Astrocyte of the cerebellum (primary cell): ENCODE measurements at regions of chr12 and their contacts with region 1.

Region 1: DNA sequence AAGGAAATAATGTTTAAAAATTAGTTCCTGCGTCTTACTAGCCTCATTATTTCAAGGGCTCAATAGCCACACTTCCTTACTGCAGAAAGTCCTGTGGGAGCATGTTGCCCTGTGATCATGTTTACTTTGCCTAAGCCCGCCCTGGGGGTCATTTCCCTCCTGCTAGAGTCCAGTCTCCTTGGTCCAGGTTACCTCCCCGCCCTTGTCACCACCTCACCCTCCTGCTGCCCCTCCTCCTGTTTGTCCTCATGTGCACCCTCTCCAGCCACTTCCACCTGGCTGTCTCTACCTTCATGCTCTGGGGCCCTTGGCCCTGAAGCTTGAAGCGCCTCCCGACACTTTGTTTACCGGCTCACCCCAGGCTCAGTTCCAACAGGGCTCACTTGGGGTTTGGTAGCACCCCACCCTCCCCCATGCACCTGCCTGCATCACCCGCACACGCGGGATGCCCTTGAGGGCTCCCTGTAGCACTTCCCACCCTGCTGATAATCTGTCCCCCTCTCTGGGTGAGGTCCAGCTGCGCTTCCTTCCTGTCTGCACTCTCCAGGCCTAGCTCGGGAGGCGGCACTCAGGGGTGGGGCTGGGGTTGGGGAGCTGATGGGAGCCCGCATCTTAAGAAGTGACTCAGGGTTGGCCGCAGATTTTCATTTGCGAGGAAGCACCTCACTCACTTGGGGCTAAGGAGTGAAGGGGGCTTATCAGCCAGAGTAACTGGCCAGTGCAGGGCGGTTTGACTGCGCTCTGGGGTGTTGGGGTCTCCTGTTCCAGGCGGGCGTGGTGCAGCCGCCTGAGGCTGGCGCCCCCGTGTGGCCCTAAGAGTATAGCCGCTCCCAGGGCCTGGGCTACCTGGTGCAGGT is 40.1 kb downstream of the SMIM41 start:
- DNase-seq: no peak
- H3K4me3 ChIP-seq: no peak overlapping the region
- CTCF ChIP-seq: peak; percentile 53

Region 2: GRCh38 chr12:52023182-52023975 is 96.2 kb before region 1 on chr12:
- in situ Hi-C with region 1: loop called (anchors 5 kb)
- DNase-seq: no peak
- H3K4me3 ChIP-seq: peak overlapping the region; percentile 43
- CTCF ChIP-seq: peak; percentile 90